ENCODE measurements at regions of chr2 and their contacts with region 1.

Region 1: DNA sequence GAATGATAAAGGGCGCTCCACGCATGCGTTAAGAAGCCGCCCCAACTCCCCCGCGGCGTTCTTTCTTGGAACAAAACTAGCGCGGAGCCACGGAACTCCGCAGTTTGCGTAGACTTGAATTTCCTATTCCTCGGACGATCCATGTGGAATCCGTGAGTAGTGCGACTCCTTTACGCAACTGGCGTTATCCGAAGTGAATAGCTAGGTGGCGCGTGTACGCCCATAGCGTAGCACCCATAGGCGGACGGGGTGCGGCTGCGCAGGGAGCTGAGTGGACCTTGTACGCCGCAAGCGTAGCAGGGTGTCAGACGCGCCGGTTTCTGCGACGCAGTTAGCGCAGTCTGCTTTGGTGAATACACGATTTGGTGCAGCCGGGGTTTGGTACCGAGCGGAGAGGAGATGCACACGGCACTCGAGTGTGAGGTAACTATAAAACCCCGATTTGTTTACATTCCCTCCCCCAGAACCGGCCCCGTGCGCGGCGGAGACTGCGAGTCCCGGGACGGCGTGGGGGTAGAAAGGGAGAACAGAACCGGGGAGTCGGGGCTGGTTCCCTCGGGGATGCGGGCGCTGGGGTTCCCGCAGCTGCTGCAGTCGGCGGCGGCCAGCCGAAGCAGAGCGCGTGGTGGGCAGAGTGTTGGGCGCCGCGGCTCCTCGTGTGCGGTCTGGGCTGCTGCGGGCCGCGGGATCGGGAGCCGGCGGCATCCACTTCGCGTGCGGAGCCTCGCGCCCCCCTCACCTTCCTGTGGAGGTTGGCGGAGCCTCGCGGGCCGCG is at the start of gene SLC39A10:
- DNase-seq: peak; percentile 94 to 100 (median 99)
- ATAC-seq: peak; percentile 83
- H3K4me3 ChIP-seq: peak within 1 kb of the TSS; percentile 57 to 96
- H3K4me3 Mint-ChIP-seq: peak within 1 kb of the TSS; percentile 96
- H3K27ac ChIP-seq: peak within 1 kb of the TSS; percentile 98
- H3K27ac Mint-ChIP-seq: peak within 1 kb of the TSS; percentile 100
- H3K4me1 ChIP-seq: peaks cover 12% of the 10 kb centered on the region
- H3K4me1 Mint-ChIP-seq: peaks cover 32% of the 10 kb centered on the region
- H3K27me3 ChIP-seq: no peaks in the 10 kb centered on the region
- H3K27me3 Mint-ChIP-seq: no peaks in the 10 kb centered on the region
- CTCF ChIP-seq: no peak
- total RNA-seq, gene SLC39A10: 35.0 to 36.3 TPM

Region 2: GRCh38 chr2:195318440-195319111 is 338.5 kb before region 1 on chr2:
- CTCF ChIA-PET with region 1: interaction called, 5 read pairs
- POLR2A ChIA-PET with region 1: no interaction called
- intact Hi-C with region 1: loop called in 1 of 2 experiments (anchors 5 kb)
- DNase-seq: peak in 7 of 9 experiments; percentile 1 to 64 (median 41)
- ATAC-seq: no peak
- H3K4me3 ChIP-seq: no peak overlapping the region
- H3K4me3 Mint-ChIP-seq: no peak overlapping the region
- H3K27ac ChIP-seq: no peak overlapping the region
- H3K27ac Mint-ChIP-seq: no peak overlapping the region
- H3K4me1 ChIP-seq: peaks cover 4% of the 10 kb centered on the region
- H3K4me1 Mint-ChIP-seq: peaks cover 8% of the 10 kb centered on the region
- H3K27me3 ChIP-seq: no peaks in the 10 kb centered on the region
- H3K27me3 Mint-ChIP-seq: no peaks in the 10 kb centered on the region
- CTCF ChIP-seq: peak; percentile 83

Region 3: DNA sequence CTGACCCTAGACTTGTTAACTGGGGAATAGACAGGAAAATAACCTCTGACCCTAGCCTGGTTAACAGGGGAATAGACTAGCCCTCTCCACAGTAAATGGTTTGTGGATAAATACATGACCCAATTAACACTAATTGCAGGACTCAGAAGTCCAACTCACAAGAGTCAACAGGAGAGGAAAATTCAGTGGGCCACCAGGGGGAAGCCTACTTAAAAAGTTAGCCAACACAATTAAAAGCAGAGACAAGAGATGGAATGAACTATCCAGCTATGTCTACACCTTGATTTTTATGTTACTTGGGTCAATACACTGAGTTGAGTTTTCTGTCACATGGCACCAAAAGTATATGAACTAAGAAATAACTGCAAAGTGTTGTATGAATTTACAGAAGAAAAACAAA is 158.9 kb before region 1 on chr2:
- CTCF ChIA-PET with region 1: interaction called, 96 read pairs
- POLR2A ChIA-PET with region 1: interaction called, 31 read pairs
- intact Hi-C with region 1: loop called (anchors 1 kb)
- DNase-seq: peak; percentile 20 to 78 (median 66)
- ATAC-seq: peak; percentile 51
- H3K4me3 ChIP-seq: no peak overlapping the region
- H3K4me3 Mint-ChIP-seq: no peak overlapping the region
- H3K27ac ChIP-seq: no peak overlapping the region
- H3K27ac Mint-ChIP-seq: no peak overlapping the region
- H3K4me1 ChIP-seq: peaks cover 15% of the 10 kb centered on the region
- H3K4me1 Mint-ChIP-seq: peaks cover 47% of the 10 kb centered on the region
- H3K27me3 ChIP-seq: no peaks in the 10 kb centered on the region
- H3K27me3 Mint-ChIP-seq: no peaks in the 10 kb centered on the region
- CTCF ChIP-seq: peak; percentile 52

Region 4: GRCh38 chr2:195575879-195576401 is 81.1 kb before region 1 on chr2:
- CTCF ChIA-PET with region 1: interaction called, 26 read pairs
- POLR2A ChIA-PET with region 1: interaction called, 19 read pairs
- intact Hi-C with region 1: loop called (anchors 1 to 5 kb)
- DNase-seq: peak in 2 of 9 experiments; percentile 43 to 64
- ATAC-seq: peak; percentile 57
- H3K4me3 ChIP-seq: no peak overlapping the region
- H3K4me3 Mint-ChIP-seq: peak overlapping the region; percentile 66
- H3K27ac ChIP-seq: no peak overlapping the region
- H3K27ac Mint-ChIP-seq: peak overlapping the region; percentile 84
- H3K4me1 ChIP-seq: peaks cover 51% of the 10 kb centered on the region
- H3K4me1 Mint-ChIP-seq: peaks cover 76% of the 10 kb centered on the region
- H3K27me3 ChIP-seq: no peaks in the 10 kb centered on the region
- H3K27me3 Mint-ChIP-seq: no peaks in the 10 kb centered on the region
- CTCF ChIP-seq: peak; percentile 6

Region 5: GRCh38 chr2:195795879-195796278 is 138.8 kb after region 1 on chr2:
- CTCF ChIA-PET with region 1: no interaction called
- POLR2A ChIA-PET with region 1: no interaction called
- intact Hi-C with region 1: no loop called
- DNase-seq: no peak
- ATAC-seq: no peak
- H3K4me3 ChIP-seq: no peak overlapping the region
- H3K4me3 Mint-ChIP-seq: no peak overlapping the region
- H3K27ac ChIP-seq: no peak overlapping the region
- H3K27ac Mint-ChIP-seq: no peak overlapping the region
- H3K4me1 ChIP-seq: no peaks in the 10 kb centered on the region
- H3K4me1 Mint-ChIP-seq: no peaks in the 10 kb centered on the region
- H3K27me3 ChIP-seq: no peaks in the 10 kb centered on the region
- H3K27me3 Mint-ChIP-seq: no peaks in the 10 kb centered on the region
- CTCF ChIP-seq: no peak

Region 6: GRCh38 chr2:196291873-196292800 is 635.1 kb after region 1 on chr2:
- CTCF ChIA-PET with region 1: no interaction called
- POLR2A ChIA-PET with region 1: no interaction called
- intact Hi-C with region 1: loop called in 1 of 2 experiments (anchors 10 kb)
- DNase-seq: peak in 2 of 9 experiments; percentile 31 to 56
- ATAC-seq: no peak
- H3K4me3 ChIP-seq: no peak overlapping the region
- H3K4me3 Mint-ChIP-seq: no peak overlapping the region
- H3K27ac ChIP-seq: peak overlapping the region in 1 of 2 experiments; percentile 17
- H3K27ac Mint-ChIP-seq: no peak overlapping the region
- H3K4me1 ChIP-seq: peaks cover 15% of the 10 kb centered on the region
- H3K4me1 Mint-ChIP-seq: peaks cover 28% of the 10 kb centered on the region
- H3K27me3 ChIP-seq: no peaks in the 10 kb centered on the region
- H3K27me3 Mint-ChIP-seq: no peaks in the 10 kb centered on the region
- CTCF ChIP-seq: no peak

Region 7: GRCh38 chr2:196639180-196640030 is 982.4 kb after region 1 on chr2 and contains the start of gene CCDC150:
- CTCF ChIA-PET with region 1: no interaction called
- POLR2A ChIA-PET with region 1: no interaction called
- intact Hi-C with region 1: loop called in 1 of 2 experiments (anchors 10 kb)
- DNase-seq: peak; percentile 89 to 96 (median 94)
- ATAC-seq: peak; percentile 100
- H3K4me3 ChIP-seq: peak within 1 kb of the TSS; percentile 68 to 85
- H3K4me3 Mint-ChIP-seq: peak within 1 kb of the TSS; percentile 86
- H3K27ac ChIP-seq: peak within 1 kb of the TSS; percentile 12 to 27
- H3K27ac Mint-ChIP-seq: peak within 1 kb of the TSS; percentile 38
- H3K4me1 ChIP-seq: peaks cover 7% of the 10 kb centered on the region
- H3K4me1 Mint-ChIP-seq: peaks cover 13% of the 10 kb centered on the region
- H3K27me3 ChIP-seq: no peaks in the 10 kb centered on the region
- H3K27me3 Mint-ChIP-seq: no peaks in the 10 kb centered on the region
- CTCF ChIP-seq: no peak
- total RNA-seq, gene CCDC150: 0.72 to 0.81 TPM

Measured in CD8-positive, alpha-beta T cell (primary cell).